CD8-positive, alpha-beta T cell (primary cell): ENCODE measurements at regions of chr17 and their contacts with region 1.

Region 1: GRCh38 chr17:51493206-51493605 is 232.9 kb downstream of the UTP18 start:
- DNase-seq: no peak
- ATAC-seq: no peak
- H3K4me3 ChIP-seq: no peak overlapping the region
- H3K4me3 Mint-ChIP-seq: no peak overlapping the region
- H3K27ac ChIP-seq: no peak overlapping the region
- H3K27ac Mint-ChIP-seq: no peak overlapping the region
- H3K4me1 ChIP-seq: no peaks in the 10 kb centered on the region
- H3K4me1 Mint-ChIP-seq: no peaks in the 10 kb centered on the region
- H3K27me3 ChIP-seq: no peaks in the 10 kb centered on the region
- H3K27me3 Mint-ChIP-seq: no peaks in the 10 kb centered on the region
- CTCF ChIP-seq: no peak

Region 2: DNA sequence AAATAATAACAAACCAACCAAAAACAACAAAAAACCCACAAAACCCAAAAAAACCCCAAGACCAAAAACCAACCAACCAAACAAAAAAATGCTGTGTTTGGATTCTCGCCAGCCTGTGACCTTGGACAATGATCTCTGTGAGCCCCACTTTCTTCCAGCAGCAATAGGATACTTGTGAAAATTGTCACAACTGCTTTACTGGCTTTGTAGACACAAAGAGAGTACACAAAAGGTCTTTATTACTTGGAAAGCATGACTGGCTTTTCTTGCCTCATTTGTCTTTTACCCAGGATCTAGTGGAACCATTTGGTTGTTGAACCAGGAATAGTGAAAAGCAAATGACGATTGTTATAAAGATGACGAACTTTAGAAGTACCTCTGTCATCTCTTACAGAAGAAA is 23.7 kb after region 1 on chr17:
- CTCF ChIA-PET with region 1: no interaction called
- POLR2A ChIA-PET with region 1: no interaction called
- intact Hi-C with region 1: no loop called
- DNase-seq: no peak
- ATAC-seq: no peak
- H3K4me3 ChIP-seq: no peak overlapping the region
- H3K4me3 Mint-ChIP-seq: no peak overlapping the region
- H3K27ac ChIP-seq: no peak overlapping the region
- H3K27ac Mint-ChIP-seq: no peak overlapping the region
- H3K4me1 ChIP-seq: no peaks in the 10 kb centered on the region
- H3K4me1 Mint-ChIP-seq: no peaks in the 10 kb centered on the region
- H3K27me3 ChIP-seq: no peaks in the 10 kb centered on the region
- H3K27me3 Mint-ChIP-seq: peaks cover 7% of the 10 kb centered on the region
- CTCF ChIP-seq: no peak

Region 3: GRCh38 chr17:51528111-51528510 is 34.9 kb after region 1 on chr17:
- CTCF ChIA-PET with region 1: no interaction called
- POLR2A ChIA-PET with region 1: no interaction called
- intact Hi-C with region 1: loop called in 1 of 2 experiments (anchors 2 kb)
- DNase-seq: no peak
- ATAC-seq: no peak
- H3K4me3 ChIP-seq: no peak overlapping the region
- H3K4me3 Mint-ChIP-seq: no peak overlapping the region
- H3K27ac ChIP-seq: no peak overlapping the region
- H3K27ac Mint-ChIP-seq: no peak overlapping the region
- H3K4me1 ChIP-seq: no peaks in the 10 kb centered on the region
- H3K4me1 Mint-ChIP-seq: no peaks in the 10 kb centered on the region
- H3K27me3 ChIP-seq: peaks cover 0 to 2% of the 10 kb centered on the region in 2 experiments
- H3K27me3 Mint-ChIP-seq: peaks cover 30% of the 10 kb centered on the region
- CTCF ChIP-seq: no peak